ENCODE measurements at regions of chr9 and their contacts with region 1.

Region 1: GRCh38 chr9:2140600-2141223 is 125.6 kb downstream of the SMARCA2 start:
- DNase-seq: no peak
- ATAC-seq: peak; percentile 27 to 77 (median 68)
- H3K4me3 ChIP-seq: no peak overlapping the region
- H3K27ac ChIP-seq: peak overlapping the region in 9 of 10 donors; percentile 45 to 72 (median 60)
- H3K4me1 ChIP-seq: peaks cover 0 to 32% (median 24%) of the 10 kb centered on the region in 9 donors
- H3K27me3 ChIP-seq: no peaks in the 10 kb centered on the region
- CTCF ChIP-seq: no peak

Region 2: DNA sequence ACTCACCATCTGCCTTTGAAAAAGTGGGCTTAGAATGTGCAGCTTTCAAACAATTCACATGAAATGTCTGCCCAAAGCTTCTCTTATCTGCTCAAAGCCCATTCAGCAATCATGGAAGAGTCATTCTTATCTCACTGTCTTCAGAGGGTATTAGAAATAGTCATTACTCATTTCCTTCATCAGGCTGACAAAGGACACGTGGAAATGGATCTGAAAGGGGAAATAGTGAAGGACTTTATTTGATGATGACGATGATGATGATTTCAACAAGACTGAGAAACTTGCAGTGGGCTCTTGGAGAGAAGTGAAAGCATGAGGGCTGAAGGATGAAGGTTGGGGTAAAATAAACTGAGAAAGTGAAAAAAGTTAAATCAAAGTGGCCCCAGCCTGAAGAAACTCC is 68.7 kb after region 1 on chr9:
- intact Hi-C with region 1: loop called in 1 of 10 experiments (anchors 10 kb)
- DNase-seq: no peak
- ATAC-seq: no peak
- H3K4me3 ChIP-seq: no peak overlapping the region
- H3K27ac ChIP-seq: peak overlapping the region in 1 of 10 donors; percentile 54
- H3K4me1 ChIP-seq: peaks cover 0 to 17% (median 7%) of the 10 kb centered on the region in 9 donors
- H3K27me3 ChIP-seq: no peaks in the 10 kb centered on the region
- CTCF ChIP-seq: no peak

Region 3: GRCh38 chr9:2228132-2228531 is 87.4 kb after region 1 on chr9:
- intact Hi-C with region 1: no loop called
- DNase-seq: peak in 1 of 2 donors; percentile 33
- ATAC-seq: peak in 3 of 8 donors; percentile 31 to 41 (median 32)
- H3K4me3 ChIP-seq: no peak overlapping the region
- H3K27ac ChIP-seq: no peak overlapping the region
- H3K4me1 ChIP-seq: peaks cover 0 to 27% (median 17%) of the 10 kb centered on the region in 9 donors
- H3K27me3 ChIP-seq: no peaks in the 10 kb centered on the region
- CTCF ChIP-seq: peak in 7 of 9 donors; percentile 28 to 54 (median 40)

Region 4: DNA sequence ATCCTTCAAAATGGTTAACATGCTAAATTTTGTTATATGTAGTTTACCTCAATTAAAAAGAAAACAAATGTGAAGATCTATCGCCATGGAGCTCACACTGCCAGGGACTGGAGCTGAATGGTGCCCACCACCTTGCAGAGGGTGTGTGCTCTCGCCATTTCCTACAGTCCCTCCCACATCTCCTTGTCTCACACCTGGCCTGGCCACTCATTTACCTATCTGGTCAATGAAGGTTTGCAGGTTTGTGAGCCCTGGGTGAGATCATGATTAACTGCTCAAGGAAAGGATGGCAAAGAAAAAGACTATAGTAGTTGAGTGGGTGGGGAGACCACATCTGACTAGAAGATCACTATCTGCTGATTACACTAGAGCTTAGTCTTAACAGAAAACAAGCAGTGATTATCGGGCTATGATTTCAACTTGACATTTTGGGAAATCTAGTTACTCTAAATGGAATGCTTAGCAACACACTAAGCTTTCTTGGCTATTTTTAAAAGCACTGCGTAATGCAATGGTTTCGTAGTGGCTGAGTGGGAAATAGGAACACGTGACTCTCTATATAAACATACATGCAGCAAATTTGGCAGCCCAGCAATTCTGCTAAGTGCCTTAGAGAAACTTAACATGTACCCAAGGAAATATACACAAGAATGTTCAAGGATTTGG is 675.9 kb after region 1 on chr9:
- intact Hi-C with region 1: loop called in 2 of 10 experiments (anchors 5 to 10 kb)
- DNase-seq: peak in 1 of 2 donors; percentile 41
- ATAC-seq: peak; percentile 63 to 89 (median 82)
- H3K4me3 ChIP-seq: no peak overlapping the region
- H3K27ac ChIP-seq: peak overlapping the region in 9 of 10 donors; percentile 13 to 86 (median 77)
- H3K4me1 ChIP-seq: peaks cover 2 to 31% (median 18%) of the 10 kb centered on the region in 9 donors
- H3K27me3 ChIP-seq: no peaks in the 10 kb centered on the region
- CTCF ChIP-seq: no peak

Measured in heart right ventricle (tissue), 16 donors.